Pancreas (tissue), 10 donors: ENCODE measurements at regions of chr12 and their contacts with region 1.

Region 1: DNA sequence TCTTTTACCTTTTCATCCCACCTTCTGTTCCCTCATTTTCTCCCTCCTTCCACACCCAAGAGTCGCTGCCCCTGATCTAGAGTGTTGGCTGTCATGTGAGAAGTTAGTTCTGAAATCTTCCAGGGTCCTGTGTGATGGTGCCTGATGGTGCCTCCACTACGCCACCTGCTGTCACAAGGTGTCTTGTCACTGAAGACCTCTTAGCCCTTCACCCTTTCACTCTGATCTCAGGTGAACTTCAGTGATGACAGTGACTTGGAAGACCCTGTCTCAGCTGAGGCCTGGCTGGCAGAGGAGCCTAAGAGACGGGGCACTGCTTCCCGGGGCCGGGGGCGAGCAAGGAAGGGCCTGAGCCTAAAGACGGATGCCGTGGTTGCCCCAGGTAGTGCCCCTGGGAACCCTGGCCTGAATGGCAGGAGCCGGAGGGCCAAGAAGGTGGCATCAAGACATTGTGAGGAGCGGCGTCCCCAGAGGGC is 7.6 kb upstream of the PFDN5 start:
- DNase-seq: peak in 5 of 6 donors; percentile 52 to 73 (median 62)
- ATAC-seq: peak; percentile 70 to 93 (median 88)
- H3K4me3 ChIP-seq: no peak overlapping the region
- H3K27ac ChIP-seq: no peak overlapping the region
- H3K4me1 ChIP-seq: no peaks in the 10 kb centered on the region
- H3K27me3 ChIP-seq: no peaks in the 10 kb centered on the region
- CTCF ChIP-seq: peak; percentile 33 to 52 (median 44)

Region 2: GRCh38 chr12:53213348-53213747 is 74.4 kb before region 1 on chr12:
- intact Hi-C with region 1: loop called (anchors 2 to 10 kb)
- DNase-seq: peak; percentile 67 to 94 (median 85)
- ATAC-seq: peak; percentile 84 to 91 (median 88)
- H3K4me3 ChIP-seq: no peak overlapping the region
- H3K27ac ChIP-seq: no peak overlapping the region
- H3K4me1 ChIP-seq: peaks cover 0 to 13% (median 0%) of the 10 kb centered on the region in 3 donors
- H3K27me3 ChIP-seq: no peaks in the 10 kb centered on the region
- CTCF ChIP-seq: peak; percentile 76 to 91 (median 82)